ENCODE measurements at regions of chr1 and their contacts with region 1.

Region 1: GRCh38 chr1:61079898-61080336 is 2.4 kb upstream of the NFIA start:
- DNase-seq: peak; percentile 89
- ATAC-seq: peak; percentile 61

Region 2: GRCh38 chr1:61049850-61050540 is 29.9 kb before region 1 on chr1:
- intact Hi-C with region 1: loop called (anchors 5 kb)
- DNase-seq: peak; percentile 97
- ATAC-seq: peak; percentile 79

Region 3: DNA sequence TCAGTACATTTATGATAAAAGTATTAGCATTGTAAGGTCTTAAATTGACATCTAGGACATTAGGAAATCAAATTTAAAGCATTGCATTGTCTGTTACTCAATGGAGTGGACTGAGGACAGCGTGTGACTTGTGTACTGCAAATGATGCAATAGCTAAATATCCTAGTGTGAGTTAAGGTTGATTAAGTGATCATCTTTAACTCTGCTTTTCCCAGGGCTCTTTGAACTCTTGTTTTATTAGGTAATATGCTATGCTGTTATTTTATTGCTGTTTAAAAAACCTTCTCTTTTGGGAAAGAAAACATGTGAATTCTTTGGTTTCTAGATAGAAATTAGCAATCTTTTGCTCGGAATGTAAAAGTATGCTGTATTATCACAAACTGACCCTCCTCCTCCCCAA is 41.1 kb after region 1 on chr1:
- intact Hi-C with region 1: loop called (anchors 5 kb)
- DNase-seq: no peak
- ATAC-seq: peak; percentile 80

Region 4: DNA sequence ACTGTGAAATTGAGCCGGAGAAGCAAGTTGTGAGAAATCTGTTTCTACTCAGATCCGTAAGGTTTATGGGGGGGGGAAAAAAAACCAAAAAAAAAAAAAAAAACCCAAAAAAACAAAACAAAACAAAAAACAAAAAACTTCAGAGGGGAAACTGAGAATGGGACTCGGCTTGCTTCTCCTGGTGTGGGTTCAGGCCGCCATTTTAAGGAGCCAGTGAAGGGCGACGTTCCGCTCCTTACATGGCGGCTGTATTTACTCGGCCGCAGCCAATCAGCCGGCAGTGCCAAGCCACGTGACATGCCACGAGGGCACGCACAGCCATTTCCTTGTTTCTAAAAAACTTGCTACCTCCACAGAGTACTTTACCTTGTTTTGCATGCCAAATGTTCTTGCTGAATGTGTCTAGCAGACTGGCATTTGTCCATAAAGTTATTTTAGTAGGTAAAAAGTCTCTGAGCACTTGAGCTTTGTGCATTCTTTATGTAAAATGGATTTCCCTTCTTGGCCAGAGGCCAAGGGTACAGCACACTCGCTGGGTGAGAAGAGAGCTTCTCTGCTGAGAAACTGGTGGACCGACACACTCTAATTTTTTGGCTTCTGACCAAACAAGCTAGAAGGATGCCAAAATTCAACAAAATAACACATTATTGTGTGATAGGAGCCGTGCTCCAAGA is 104.3 kb after region 1 on chr1:
- intact Hi-C with region 1: loop called (anchors 5 kb)
- DNase-seq: peak; percentile 95
- ATAC-seq: peak; percentile 90